Activated CD8-positive, alpha-beta T cell treated with anti-CD3 and anti-CD28 coated beads, Interleukin-2, amount 10 ng/mL, durations not matched to agents 7 days and 5 days (primary cell): ENCODE measurements at regions of chr6 and their contacts with region 1.

Region 1: DNA sequence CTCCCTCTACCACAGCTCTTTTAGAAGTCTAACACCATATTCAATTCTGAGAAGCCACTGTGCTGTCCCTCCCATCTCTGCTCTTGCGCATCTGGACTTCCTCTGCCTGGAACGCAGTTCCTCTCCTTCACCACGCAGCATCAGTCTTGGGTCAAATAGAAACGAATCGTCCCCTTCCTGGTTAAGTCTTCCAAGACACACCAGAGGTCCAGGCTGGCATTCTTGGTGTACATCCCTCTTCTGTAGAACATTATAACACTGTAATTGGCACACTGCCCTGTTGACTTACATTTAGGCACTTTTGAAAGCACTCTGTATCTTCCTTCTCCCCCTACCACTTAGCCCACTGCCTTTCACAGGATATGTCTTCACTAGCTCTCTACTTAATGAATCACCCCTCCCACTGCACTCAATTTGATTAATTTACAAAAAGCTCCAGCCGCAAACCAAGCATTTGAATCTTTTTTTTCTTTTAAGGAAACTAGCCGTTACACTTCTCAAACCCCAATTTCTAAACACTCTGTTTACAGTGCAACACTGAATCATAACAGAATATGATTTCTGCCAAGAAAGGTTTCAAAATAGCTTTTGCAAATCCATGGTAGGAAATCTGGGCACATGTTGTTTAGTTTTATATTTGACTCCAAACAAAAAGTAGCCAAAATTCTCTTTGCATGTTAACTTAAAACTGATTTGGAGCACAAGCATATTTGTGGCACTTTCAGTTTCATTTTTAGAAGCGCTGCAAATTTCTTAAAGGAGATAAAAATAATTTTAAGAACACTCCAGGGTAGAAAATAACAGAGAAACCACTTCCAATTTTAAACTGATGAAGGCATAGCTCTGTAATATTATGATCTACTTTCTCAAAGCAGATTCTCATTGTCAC is 140.7 kb upstream of the CARMIL1 start:
- DNase-seq: peak; percentile 82
- ATAC-seq: peak; percentile 92
- H3K4me3 Mint-ChIP-seq: peak overlapping the region; percentile 92
- H3K27ac Mint-ChIP-seq: peak overlapping the region; percentile 95
- H3K4me1 Mint-ChIP-seq: peaks cover 35% of the 10 kb centered on the region
- H3K27me3 Mint-ChIP-seq: no peaks in the 10 kb centered on the region

Region 2: GRCh38 chr6:25127076-25127837 is 11.2 kb before region 1 on chr6:
- CTCF ChIA-PET with region 1: interaction called, 3 read pairs
- POLR2A ChIA-PET with region 1: interaction called, 10 read pairs
- DNase-seq: no peak
- ATAC-seq: no peak
- H3K4me3 Mint-ChIP-seq: no peak overlapping the region
- H3K27ac Mint-ChIP-seq: no peak overlapping the region
- H3K4me1 Mint-ChIP-seq: peaks cover 54% of the 10 kb centered on the region
- H3K27me3 Mint-ChIP-seq: no peaks in the 10 kb centered on the region

Region 3: DNA sequence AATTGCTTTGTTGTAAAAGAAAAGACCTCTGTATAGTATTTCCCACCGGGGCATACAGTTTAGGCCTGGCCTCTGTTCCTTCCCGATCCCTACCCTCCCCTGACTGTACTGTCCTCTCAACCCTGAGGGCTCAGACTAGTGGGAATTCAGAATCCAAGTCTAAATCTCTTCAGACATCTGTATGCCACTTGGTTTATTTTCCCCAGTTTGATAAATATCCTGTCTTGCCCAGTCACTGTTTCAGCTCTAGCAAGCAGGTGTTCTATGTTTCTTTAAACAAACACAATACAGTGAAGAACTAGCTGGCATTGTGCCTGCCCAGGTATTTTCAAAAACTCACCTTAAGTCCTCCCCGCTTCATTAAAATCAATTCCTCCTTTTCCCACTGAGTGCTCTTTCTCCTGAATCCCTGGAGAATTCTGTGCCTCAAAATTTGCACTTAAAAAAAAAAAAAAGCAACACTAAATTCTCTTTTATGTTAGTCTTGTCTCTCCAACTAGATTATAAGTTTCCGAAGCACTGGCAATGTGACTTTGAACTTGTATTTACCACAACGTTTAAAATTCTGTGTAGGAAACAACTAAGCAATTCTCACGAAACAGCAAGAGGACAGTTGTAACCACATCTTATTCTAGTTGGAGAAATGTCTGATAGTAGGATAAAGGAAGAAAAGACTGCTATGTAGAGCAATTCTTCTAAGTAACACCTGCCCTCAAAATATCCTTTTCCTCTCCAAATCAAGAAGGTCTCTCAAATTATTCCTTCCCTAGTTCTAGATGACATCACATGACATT is 28.7 kb after region 1 on chr6:
- CTCF ChIA-PET with region 1: interaction called, 5 read pairs
- POLR2A ChIA-PET with region 1: interaction called, 24 read pairs
- DNase-seq: no peak
- ATAC-seq: no peak
- H3K4me3 Mint-ChIP-seq: no peak overlapping the region
- H3K27ac Mint-ChIP-seq: no peak overlapping the region
- H3K4me1 Mint-ChIP-seq: peaks cover 46% of the 10 kb centered on the region
- H3K27me3 Mint-ChIP-seq: no peaks in the 10 kb centered on the region

Region 4: GRCh38 chr6:25173951-25174474 is 35.5 kb after region 1 on chr6:
- CTCF ChIA-PET with region 1: interaction called, 7 read pairs
- POLR2A ChIA-PET with region 1: interaction called, 15 read pairs
- DNase-seq: no peak
- ATAC-seq: no peak
- H3K4me3 Mint-ChIP-seq: no peak overlapping the region
- H3K27ac Mint-ChIP-seq: no peak overlapping the region
- H3K4me1 Mint-ChIP-seq: peaks cover 52% of the 10 kb centered on the region
- H3K27me3 Mint-ChIP-seq: no peaks in the 10 kb centered on the region

Region 5: DNA sequence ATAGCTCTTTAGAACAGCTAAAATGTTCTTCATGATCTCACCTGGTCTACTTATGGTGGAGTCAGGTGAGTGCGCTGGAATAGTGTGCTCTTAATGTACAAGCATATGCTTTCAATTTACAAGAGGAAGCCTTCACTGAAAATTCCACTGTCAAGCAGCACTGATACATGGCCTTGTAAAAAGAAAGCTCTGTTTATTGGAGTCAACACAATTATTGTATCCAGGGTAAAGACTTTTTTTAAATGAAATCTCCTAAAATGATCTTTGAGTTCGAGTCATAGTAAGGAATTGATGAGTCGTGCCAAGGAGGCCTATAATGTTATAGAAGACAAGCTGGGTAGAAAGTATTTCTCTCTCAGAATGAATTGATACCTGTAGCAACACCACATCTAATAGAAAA is 99.1 kb after region 1 on chr6:
- CTCF ChIA-PET with region 1: no interaction called
- POLR2A ChIA-PET with region 1: no interaction called
- DNase-seq: no peak
- ATAC-seq: no peak
- H3K4me3 Mint-ChIP-seq: no peak overlapping the region
- H3K27ac Mint-ChIP-seq: no peak overlapping the region
- H3K4me1 Mint-ChIP-seq: no peaks in the 10 kb centered on the region
- H3K27me3 Mint-ChIP-seq: no peaks in the 10 kb centered on the region